ENCODE measurements at regions of chr7 and their contacts with region 1.

Region 1: GRCh38 chr7:38451840-38452239 is 178.4 kb upstream of the TARP start:
- DNase-seq: no peak
- ATAC-seq: peak in 3 of 4 donors; percentile 45 to 72 (median 63)
- H3K4me3 ChIP-seq: no peak overlapping the region
- H3K27ac ChIP-seq: no peak overlapping the region
- H3K4me1 ChIP-seq: peaks cover 0 to 16% (median 7%) of the 10 kb centered on the region in 12 donors
- H3K27me3 ChIP-seq: no peaks in the 10 kb centered on the region
- CTCF ChIP-seq: peak in 11 of 12 donors; percentile 12 to 49 (median 30)
- POLR2A ChIP-seq: no peak

Region 2: GRCh38 chr7:38660427-38661099 is 208.7 kb after region 1 on chr7:
- intact Hi-C with region 1: loop called in 7 of 10 experiments (anchors 2 to 10 kb)
- DNase-seq: peak in 2 of 5 donors; percentile 27 to 35
- ATAC-seq: peak in 3 of 4 donors; percentile 36 to 56 (median 42)
- H3K4me3 ChIP-seq: no peak overlapping the region
- H3K27ac ChIP-seq: no peak overlapping the region
- H3K4me1 ChIP-seq: peaks cover 0 to 20% (median 0%) of the 10 kb centered on the region in 12 donors
- H3K27me3 ChIP-seq: no peaks in the 10 kb centered on the region
- CTCF ChIP-seq: peak; percentile 33 to 63 (median 54)
- POLR2A ChIP-seq: no peak

Region 3: DNA sequence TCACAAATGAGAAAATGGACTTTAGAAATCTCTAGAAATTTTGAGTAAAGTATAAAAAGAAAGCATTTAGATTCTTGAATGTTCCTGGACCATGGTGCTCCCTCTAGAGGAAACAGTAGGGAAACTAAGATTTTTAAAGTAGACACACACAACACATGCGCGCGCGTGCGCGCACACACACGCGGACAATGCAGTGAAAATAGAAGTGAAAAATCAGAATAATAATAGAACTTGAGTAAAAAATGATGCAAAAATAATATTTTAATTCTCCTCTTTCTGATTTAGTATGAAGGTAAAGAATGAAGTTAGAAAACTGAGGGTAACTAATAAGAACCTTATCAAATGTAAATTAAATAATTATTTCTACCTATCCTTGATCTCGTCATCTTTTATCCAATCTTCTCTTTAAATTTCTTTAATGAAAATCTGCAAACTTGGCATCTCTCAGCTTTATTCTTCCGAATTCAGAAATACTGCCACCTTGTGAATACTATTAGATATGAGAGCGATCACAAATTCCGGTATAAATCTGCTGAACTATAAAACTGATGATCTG is 296.3 kb after region 1 on chr7:
- intact Hi-C with region 1: loop called in 5 of 10 experiments (anchors 5 to 10 kb)
- DNase-seq: no peak
- ATAC-seq: peak in 1 of 4 donors; percentile 62
- H3K4me3 ChIP-seq: peak overlapping the region in 2 of 12 donors; percentile 21 to 24
- H3K27ac ChIP-seq: no peak overlapping the region
- H3K4me1 ChIP-seq: peaks cover 0 to 4% (median 0%) of the 10 kb centered on the region in 12 donors
- H3K27me3 ChIP-seq: no peaks in the 10 kb centered on the region
- CTCF ChIP-seq: peak in 11 of 12 donors; percentile 10 to 59 (median 31)
- POLR2A ChIP-seq: no peak

Measured in heart left ventricle (tissue), 16 donors.